ENCODE measurements at regions of chrX and their contacts with region 1.

Region 1: GRCh38 chrX:46733226-46733625 is 25.7 kb downstream of the SLC9A7 start:
- DNase-seq: no peak
- H3K4me3 Mint-ChIP-seq: no peak overlapping the region
- H3K27ac Mint-ChIP-seq: peak overlapping the region; percentile 16
- H3K4me1 Mint-ChIP-seq: peaks cover 17% of the 10 kb centered on the region
- H3K27me3 Mint-ChIP-seq: no peaks in the 10 kb centered on the region

Region 2: DNA sequence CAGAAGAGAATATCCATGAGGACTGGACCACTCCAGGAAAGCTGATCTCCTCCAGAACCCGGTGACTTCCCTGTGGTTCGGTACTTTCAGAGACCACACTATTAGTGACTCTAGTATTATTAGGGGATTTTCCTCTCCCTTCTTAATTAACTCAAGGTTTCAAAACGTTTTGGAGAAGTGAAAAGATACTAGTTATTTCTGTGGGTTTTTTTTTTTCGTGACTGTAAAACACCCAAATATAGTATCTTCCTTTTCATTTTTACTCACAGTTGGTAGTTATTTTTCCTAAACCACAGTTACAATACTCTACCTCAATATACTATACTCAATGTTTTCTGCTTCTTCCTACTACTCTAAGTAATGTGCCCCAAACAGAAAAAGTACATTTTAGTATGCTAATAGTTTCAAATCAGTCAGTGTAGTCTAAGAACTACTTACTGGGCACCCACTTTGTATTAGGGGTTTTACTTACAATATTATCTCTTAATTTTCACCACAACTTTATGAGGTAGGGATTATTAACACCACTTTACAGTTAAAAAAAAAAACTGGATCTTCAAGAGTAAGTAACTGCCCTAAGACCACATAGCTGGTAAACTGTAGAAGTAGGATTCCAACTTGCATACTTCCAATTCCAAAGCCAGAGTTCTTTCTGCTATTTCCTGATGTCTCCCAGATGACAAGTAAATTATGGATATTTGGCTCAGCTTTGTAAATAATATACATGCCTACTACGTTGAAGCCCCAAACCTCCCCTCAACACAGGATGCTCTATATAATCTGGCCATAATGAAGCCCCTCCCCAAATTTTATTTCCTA is 19.3 kb before region 1 on chrX:
- intact Hi-C with region 1: loop called (anchors 2 kb)
- DNase-seq: no peak
- H3K4me3 Mint-ChIP-seq: peak overlapping the region; percentile 39
- H3K27ac Mint-ChIP-seq: peak overlapping the region; percentile 83
- H3K4me1 Mint-ChIP-seq: peaks cover 69% of the 10 kb centered on the region
- H3K27me3 Mint-ChIP-seq: no peaks in the 10 kb centered on the region

Region 3: DNA sequence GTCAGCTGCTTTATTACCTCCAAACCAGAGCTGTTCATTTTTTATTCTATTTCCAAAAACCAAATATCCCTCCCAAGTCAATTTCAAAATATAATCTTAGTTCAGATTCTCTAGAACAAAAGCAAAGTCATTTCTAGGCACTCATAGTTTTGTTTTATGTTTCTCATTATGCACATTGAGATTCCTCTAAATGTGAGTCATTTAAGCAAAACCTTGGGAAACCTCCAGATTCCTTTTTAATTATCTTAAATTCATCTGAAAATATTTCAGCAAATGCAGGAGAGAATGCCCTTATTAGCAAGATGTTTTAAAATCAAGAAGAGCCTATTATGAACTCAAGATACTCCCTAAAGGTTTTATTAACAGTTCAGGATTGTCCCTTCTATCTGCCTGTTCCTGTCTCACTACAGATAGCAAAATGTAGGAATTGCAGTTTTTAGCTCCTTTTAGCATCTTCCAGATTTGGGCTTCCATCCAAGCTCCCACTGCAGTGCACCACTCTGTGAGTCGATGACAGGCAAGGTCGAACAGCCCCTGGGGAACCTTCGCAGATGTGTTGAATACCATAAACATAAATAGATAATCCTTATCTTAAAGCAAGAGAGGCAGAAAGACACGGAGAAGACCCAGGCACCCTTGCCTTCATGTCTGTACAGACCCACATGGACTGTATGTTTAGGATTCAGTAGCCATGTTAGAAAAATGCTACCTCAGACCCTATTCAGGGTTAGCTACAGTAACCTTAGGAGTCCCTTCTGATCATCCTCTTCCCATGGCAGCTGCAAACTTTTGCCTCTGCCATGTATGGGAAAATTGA is 37.0 kb after region 1 on chrX:
- intact Hi-C with region 1: no loop called
- DNase-seq: no peak
- H3K4me3 Mint-ChIP-seq: no peak overlapping the region
- H3K27ac Mint-ChIP-seq: no peak overlapping the region
- H3K4me1 Mint-ChIP-seq: no peaks in the 10 kb centered on the region
- H3K27me3 Mint-ChIP-seq: peaks cover 4% of the 10 kb centered on the region

Measured in activated T-helper 1 cell treated with anti-CD3 and anti-CD28 coated beads, Interleukin-12 subunit alpha, Interleukin-12 subunit beta, Interleukin-2, Interleukin-4 antibody, amounts not matched to agents 30 ng/mL and 10 ng/mL and 1 ng/mL, durations not matched to agents 14 hours and 24 hours and 36 hours (primary cell).